Activated B cell treated with CpG ODN at 0.5 μM for 24 hours (primary cell): ENCODE measurements at regions of chr4 and their contacts with region 1.

Region 1: GRCh38 chr4:10157478-10158332 is 41.1 kb upstream of the WDR1 start:
- DNase-seq: no peak
- ATAC-seq: peak; percentile 79
- H3K4me3 Mint-ChIP-seq: no peak overlapping the region
- H3K27ac Mint-ChIP-seq: no peak overlapping the region
- H3K4me1 Mint-ChIP-seq: peaks cover 2% of the 10 kb centered on the region
- H3K27me3 Mint-ChIP-seq: peaks cover 24% of the 10 kb centered on the region
- CTCF ChIP-seq: no peak

Region 2: DNA sequence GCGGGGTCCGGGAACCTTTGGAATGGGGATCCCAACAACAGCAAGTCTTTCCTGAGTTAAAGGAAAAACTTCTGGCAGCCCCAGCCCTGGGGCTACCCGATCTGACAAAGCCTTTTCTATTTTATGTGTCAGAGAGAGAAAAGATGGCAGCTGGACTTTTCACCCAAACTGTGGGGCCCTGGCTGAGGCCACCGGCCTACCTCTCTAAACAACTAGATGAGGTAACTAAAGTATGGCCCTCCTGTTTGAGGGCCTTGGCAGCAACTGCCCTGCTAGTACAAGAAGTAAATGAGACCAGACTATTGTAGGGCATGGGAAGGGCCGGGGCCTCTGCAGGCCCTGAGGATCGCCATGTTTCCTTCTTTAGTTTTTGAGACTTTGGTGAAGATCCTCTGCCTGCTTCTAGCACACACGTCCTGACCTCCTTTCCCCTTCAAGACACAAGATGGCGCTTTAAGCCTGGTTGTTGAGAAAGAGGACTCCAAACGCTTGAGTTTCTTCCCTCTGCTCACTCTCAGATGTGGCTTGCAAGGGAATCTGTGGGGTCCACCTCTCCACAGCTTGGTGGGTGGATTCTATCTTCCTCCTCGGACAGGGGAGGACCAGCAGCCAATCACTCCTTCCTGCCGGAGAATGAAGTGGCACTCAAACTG is 394.8 kb before region 1 on chr4:
- CTCF ChIA-PET with region 1: no interaction called
- POLR2A ChIA-PET with region 1: no interaction called
- intact Hi-C with region 1: loop called (anchors 5 kb)
- DNase-seq: no peak
- ATAC-seq: no peak
- H3K4me3 Mint-ChIP-seq: no peak overlapping the region
- H3K27ac Mint-ChIP-seq: no peak overlapping the region
- H3K4me1 Mint-ChIP-seq: no peaks in the 10 kb centered on the region
- H3K27me3 Mint-ChIP-seq: peaks cover 2% of the 10 kb centered on the region
- CTCF ChIP-seq: no peak